ENCODE measurements at regions of chr20 and their contacts with region 1.

Region 1: GRCh38 chr20:53287357-53288042 is 306.1 kb downstream of the ZNF217 start:
- DNase-seq: no peak
- H3K4me3 ChIP-seq: no peak overlapping the region
- H3K27ac ChIP-seq: no peak overlapping the region
- H3K4me1 ChIP-seq: no peaks in the 10 kb centered on the region
- H3K27me3 ChIP-seq: no peaks in the 10 kb centered on the region
- CTCF ChIP-seq: no peak
- EP300 ChIP-seq: no peak
- POLR2A ChIP-seq: no peak

Region 2: GRCh38 chr20:51469578-51470498 is 1817.7 kb before region 1 on chr20:
- in situ Hi-C with region 1: no loop called
- intact Hi-C with region 1: no loop called
- DNase-seq: no peak
- H3K4me3 ChIP-seq: no peak overlapping the region
- H3K27ac ChIP-seq: no peak overlapping the region
- H3K4me1 ChIP-seq: no peaks in the 10 kb centered on the region
- H3K27me3 ChIP-seq: no peaks in the 10 kb centered on the region
- CTCF ChIP-seq: no peak
- EP300 ChIP-seq: no peak
- POLR2A ChIP-seq: no peak

Region 3: GRCh38 chr20:53244711-53245110 is 42.8 kb before region 1 on chr20:
- in situ Hi-C with region 1: no loop called
- intact Hi-C with region 1: loop called (anchors 5 kb)
- DNase-seq: no peak
- H3K4me3 ChIP-seq: no peak overlapping the region
- H3K27ac ChIP-seq: no peak overlapping the region
- H3K4me1 ChIP-seq: no peaks in the 10 kb centered on the region
- H3K27me3 ChIP-seq: no peaks in the 10 kb centered on the region
- CTCF ChIP-seq: no peak
- EP300 ChIP-seq: no peak
- POLR2A ChIP-seq: no peak

Region 4: DNA sequence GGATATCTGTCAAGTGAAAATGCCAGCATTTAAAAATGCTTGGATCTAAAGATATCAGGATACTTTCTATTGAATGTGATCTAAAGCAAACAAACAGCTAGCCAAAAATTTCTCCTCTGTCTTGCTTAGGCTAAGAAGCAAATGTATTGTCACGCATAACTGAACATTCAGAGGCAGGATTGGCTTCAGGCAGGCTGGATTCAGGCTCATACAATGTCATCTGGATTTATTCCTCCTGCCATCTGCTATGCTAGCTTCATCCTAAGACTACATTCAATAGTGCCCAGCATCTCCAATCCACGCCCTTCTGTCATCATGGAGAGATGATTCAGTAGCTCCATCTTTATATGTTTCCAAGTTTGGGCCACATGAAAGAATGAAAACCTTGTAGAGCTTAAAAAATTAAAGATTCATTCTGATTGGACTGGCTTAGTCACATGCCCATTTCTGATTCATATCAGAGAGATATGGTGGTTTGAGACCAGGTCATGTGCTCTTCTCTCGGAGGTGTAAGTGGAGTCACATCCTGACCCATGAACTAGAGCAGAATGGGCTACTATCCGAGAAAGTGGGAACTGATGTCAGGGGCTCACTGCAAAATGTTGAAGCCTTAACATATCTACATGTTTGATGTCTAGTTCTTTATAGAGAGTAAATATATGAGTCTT is 947.6 kb after region 1 on chr20:
- in situ Hi-C with region 1: no loop called
- intact Hi-C with region 1: loop called (anchors 5 kb)
- DNase-seq: no peak
- H3K4me3 ChIP-seq: no peak overlapping the region
- H3K27ac ChIP-seq: no peak overlapping the region
- H3K4me1 ChIP-seq: no peaks in the 10 kb centered on the region
- H3K27me3 ChIP-seq: no peaks in the 10 kb centered on the region
- CTCF ChIP-seq: no peak
- EP300 ChIP-seq: no peak
- POLR2A ChIP-seq: no peak

Measured in transverse colon (tissue), 4 donors.